ENCODE measurements at regions of chr11 and their contacts with region 1.

Region 1: GRCh38 chr11:128552783-128553661 is 34.3 kb downstream of the ETS1 start:
- DNase-seq: peak; percentile 93
- ATAC-seq: peak; percentile 80
- H3K4me3 ChIP-seq: peak overlapping the region; percentile 4 to 58 (median 27)
- H3K4me3 Mint-ChIP-seq: peak overlapping the region; percentile 85
- H3K27ac ChIP-seq: peak overlapping the region; percentile 92 to 93
- H3K27ac Mint-ChIP-seq: peak overlapping the region; percentile 99
- H3K4me1 ChIP-seq: peaks cover 62 to 71% of the 10 kb centered on the region in 2 donors
- H3K4me1 Mint-ChIP-seq: peaks cover 70% of the 10 kb centered on the region
- H3K27me3 ChIP-seq: no peaks in the 10 kb centered on the region
- H3K27me3 Mint-ChIP-seq: no peaks in the 10 kb centered on the region
- CTCF ChIP-seq: peak; percentile 10

Region 2: DNA sequence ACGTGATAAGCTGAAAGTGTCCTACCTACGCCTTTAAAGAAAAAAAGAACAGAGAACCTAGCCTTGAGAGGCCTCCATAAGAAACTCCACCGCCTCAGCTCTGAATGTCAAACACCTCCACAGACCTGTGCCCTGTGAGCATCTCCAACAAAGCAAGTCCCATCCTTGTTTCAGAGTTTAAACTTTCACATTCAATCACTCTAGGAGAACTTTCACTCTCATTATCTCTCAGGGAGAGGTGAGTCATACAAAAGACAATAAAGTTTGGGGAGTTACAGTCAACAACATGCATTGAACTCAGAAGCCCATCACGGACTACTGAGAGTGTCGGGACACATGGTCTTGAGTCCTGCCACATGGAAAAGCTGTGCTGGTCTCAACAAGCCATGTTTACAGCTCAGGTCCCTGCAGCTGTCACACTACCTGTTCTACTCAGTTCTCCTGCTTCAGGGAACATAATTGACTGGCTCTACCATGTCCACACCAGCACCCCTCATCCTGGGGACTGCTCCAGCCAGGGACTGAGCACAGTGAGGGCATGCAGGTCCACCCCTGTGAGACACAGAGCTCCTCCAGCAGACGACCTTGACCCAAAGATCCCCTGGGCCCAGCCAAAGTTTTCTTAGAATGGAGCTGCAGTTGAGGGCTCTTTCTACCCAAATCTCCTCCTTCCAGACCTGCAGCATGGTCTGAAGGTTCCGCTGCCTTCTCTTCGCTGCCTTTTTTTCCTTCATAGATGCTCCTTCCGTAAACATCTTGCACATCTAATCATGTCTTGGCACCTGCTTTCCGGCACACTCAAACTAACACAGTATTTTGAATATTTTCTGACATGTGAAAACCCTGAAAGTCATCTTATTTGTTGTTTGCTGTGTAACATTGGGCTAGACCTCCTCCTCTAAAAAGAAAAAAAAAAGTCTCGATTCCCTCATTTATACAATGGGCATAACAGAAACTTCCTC is 80.6 kb before region 1 on chr11:
- CTCF ChIA-PET with region 1: interaction called, 12 read pairs
- POLR2A ChIA-PET with region 1: interaction called, 5 read pairs
- intact Hi-C with region 1: loop called (anchors 2 kb)
- DNase-seq: peak; percentile 57
- ATAC-seq: peak; percentile 9
- H3K4me3 ChIP-seq: peak overlapping the region in 2 of 5 experiments; percentile 15 to 54
- H3K4me3 Mint-ChIP-seq: peak overlapping the region; percentile 71
- H3K27ac ChIP-seq: peak overlapping the region; percentile 74 to 90
- H3K27ac Mint-ChIP-seq: peak overlapping the region; percentile 89
- H3K4me1 ChIP-seq: peaks cover 98 to 100% of the 10 kb centered on the region in 2 donors
- H3K4me1 Mint-ChIP-seq: peaks cover 97% of the 10 kb centered on the region
- H3K27me3 ChIP-seq: no peaks in the 10 kb centered on the region
- H3K27me3 Mint-ChIP-seq: no peaks in the 10 kb centered on the region
- CTCF ChIP-seq: no peak

Region 3: DNA sequence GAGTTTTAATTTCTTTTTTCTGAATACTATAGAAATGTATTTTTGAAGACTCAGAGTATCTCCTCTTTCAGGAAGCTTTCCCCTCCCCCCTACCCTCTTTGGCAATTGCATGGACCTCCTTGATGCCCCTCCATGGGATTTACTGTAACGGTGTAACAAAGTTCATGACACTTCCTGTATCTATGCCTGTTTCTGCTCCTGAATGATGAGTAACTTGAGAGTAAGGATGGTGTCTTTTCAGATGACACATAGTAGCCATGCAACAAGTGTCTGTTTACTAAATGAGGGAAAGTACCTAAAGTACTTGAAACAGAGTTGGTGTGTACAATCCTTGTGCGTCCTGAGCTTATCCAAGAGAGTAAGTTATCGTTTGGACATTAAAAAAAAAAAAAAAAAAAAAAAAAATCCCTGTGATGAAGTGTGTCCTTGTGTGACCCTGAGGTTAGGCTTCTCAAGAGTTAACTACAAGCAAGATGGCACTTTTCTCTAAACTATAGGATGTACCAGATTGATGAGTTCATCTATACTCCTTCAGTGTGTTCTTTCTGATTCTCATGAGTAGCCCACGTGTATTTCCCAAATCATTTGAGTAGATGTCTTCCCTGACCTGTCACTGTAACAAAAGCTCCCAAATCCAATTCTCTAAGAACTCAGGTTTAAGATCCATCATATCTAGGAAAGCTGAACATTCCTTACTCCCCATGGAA is 26.9 kb after region 1 on chr11:
- CTCF ChIA-PET with region 1: no interaction called
- POLR2A ChIA-PET with region 1: no interaction called
- intact Hi-C with region 1: loop called (anchors 2 kb)
- DNase-seq: no peak
- ATAC-seq: peak; percentile 67
- H3K4me3 ChIP-seq: no peak overlapping the region
- H3K4me3 Mint-ChIP-seq: no peak overlapping the region
- H3K27ac ChIP-seq: no peak overlapping the region
- H3K27ac Mint-ChIP-seq: no peak overlapping the region
- H3K4me1 ChIP-seq: peaks cover 14 to 15% of the 10 kb centered on the region in 2 donors
- H3K4me1 Mint-ChIP-seq: peaks cover 41% of the 10 kb centered on the region
- H3K27me3 ChIP-seq: no peaks in the 10 kb centered on the region
- H3K27me3 Mint-ChIP-seq: no peaks in the 10 kb centered on the region
- CTCF ChIP-seq: no peak

Region 4: GRCh38 chr11:128610721-128611617 is 57.9 kb after region 1 on chr11:
- CTCF ChIA-PET with region 1: interaction called, 37 read pairs
- POLR2A ChIA-PET with region 1: interaction called, 30 read pairs
- intact Hi-C with region 1: loop called (anchors 1 kb)
- DNase-seq: peak; percentile 95
- ATAC-seq: peak; percentile 89
- H3K4me3 ChIP-seq: peak overlapping the region in 3 of 5 experiments; percentile 20 to 61 (median 29)
- H3K4me3 Mint-ChIP-seq: peak overlapping the region; percentile 58
- H3K27ac ChIP-seq: peak overlapping the region; percentile 93 to 95
- H3K27ac Mint-ChIP-seq: peak overlapping the region; percentile 93
- H3K4me1 ChIP-seq: peaks cover 85 to 87% of the 10 kb centered on the region in 2 donors
- H3K4me1 Mint-ChIP-seq: peaks cover 89% of the 10 kb centered on the region
- H3K27me3 ChIP-seq: no peaks in the 10 kb centered on the region
- H3K27me3 Mint-ChIP-seq: no peaks in the 10 kb centered on the region
- CTCF ChIP-seq: no peak

Region 5: DNA sequence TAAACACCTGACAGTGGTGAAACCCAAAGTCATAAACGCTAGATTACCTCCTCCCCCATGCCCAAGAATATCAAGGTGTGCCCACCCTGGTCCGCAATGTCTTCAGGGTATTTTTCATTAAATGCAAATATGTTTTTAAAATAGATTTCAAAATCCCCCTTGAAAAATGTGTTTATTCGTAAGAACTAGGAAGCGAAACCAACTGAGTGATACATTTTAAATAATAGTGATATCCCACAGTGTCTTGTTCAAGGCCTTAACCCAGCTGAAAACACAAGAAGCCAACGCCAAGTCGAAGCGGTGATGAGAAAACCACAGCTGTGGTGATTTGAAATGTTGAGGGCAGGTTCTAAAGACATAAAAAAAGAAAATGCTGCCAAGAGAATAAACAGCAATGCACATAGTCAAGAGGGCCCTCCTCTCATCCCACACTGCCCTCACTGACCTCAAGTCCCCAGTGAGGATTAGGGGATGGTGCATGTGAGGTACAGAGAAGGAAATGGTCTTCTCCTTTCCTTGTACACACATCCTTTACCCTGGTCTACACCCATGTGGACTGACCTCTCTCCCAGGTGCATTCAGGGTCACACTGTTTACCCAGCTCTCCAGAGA is 288.5 kb after region 1 on chr11:
- CTCF ChIA-PET with region 1: no interaction called
- POLR2A ChIA-PET with region 1: no interaction called
- intact Hi-C with region 1: loop called (anchors 5 kb)
- DNase-seq: peak; percentile 84
- ATAC-seq: peak; percentile 77
- H3K4me3 ChIP-seq: peak overlapping the region in 1 of 5 experiments; percentile 8
- H3K4me3 Mint-ChIP-seq: peak overlapping the region; percentile 70
- H3K27ac ChIP-seq: peak overlapping the region; percentile 94 to 95
- H3K27ac Mint-ChIP-seq: peak overlapping the region; percentile 95
- H3K4me1 ChIP-seq: peaks cover 96 to 100% of the 10 kb centered on the region in 2 donors
- H3K4me1 Mint-ChIP-seq: peaks cover 97% of the 10 kb centered on the region
- H3K27me3 ChIP-seq: no peaks in the 10 kb centered on the region
- H3K27me3 Mint-ChIP-seq: no peaks in the 10 kb centered on the region
- CTCF ChIP-seq: no peak

Region 6: DNA sequence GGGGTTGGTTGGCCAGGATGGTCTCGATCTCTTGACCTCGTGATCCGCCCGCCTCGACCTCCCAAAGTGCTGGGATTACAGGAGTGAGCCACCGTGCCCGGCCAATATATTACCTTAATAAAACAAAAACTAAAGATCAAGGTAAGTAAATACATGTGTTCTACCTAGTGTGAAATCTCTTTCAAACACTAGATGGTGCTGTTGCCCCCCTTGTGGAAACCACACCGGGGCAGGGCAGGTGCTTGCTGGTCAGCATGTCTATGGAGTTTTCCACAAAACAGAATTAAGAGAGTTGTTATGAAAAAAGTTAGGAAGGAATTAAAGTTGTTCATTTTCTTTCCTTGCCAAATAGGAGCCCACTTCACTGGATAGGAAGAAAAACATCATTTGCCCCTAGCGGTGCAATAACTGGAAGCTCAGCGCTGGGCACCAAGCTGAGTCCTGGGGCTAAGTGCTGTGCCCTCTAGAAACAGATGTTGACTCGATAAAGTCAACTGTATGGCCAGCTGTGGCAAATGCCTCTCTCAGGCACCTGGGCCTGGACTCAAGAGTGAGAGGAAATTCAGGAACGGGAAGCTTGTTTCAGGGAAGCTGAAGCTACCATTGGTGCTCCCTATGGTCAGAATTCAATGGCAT is 331.8 kb after region 1 on chr11:
- CTCF ChIA-PET with region 1: no interaction called
- POLR2A ChIA-PET with region 1: no interaction called
- intact Hi-C with region 1: no loop called
- DNase-seq: peak; percentile 79
- ATAC-seq: peak; percentile 82
- H3K4me3 ChIP-seq: no peak overlapping the region
- H3K4me3 Mint-ChIP-seq: no peak overlapping the region
- H3K27ac ChIP-seq: no peak overlapping the region
- H3K27ac Mint-ChIP-seq: peak overlapping the region; percentile 54
- H3K4me1 ChIP-seq: peaks cover under 1 to 7% of the 10 kb centered on the region in 2 donors
- H3K4me1 Mint-ChIP-seq: peaks cover 3% of the 10 kb centered on the region
- H3K27me3 ChIP-seq: peaks cover 0 to 73% (median 48%) of the 10 kb centered on the region in 4 experiments
- H3K27me3 Mint-ChIP-seq: peaks cover 78% of the 10 kb centered on the region
- CTCF ChIP-seq: peak; percentile 85